Left ventricle myocardium superior (tissue), 1 donor: ENCODE measurements at regions of chr3 and their contacts with region 1.

Region 1: GRCh38 chr3:125246237-125246636 is 33.7 kb upstream of the SLC12A8 start:
- DNase-seq: no peak
- ATAC-seq: no peak

Region 2: GRCh38 chr3:124995460-124995994 is 250.7 kb before region 1 on chr3:
- intact Hi-C with region 1: no loop called
- DNase-seq: peak; percentile 59
- ATAC-seq: peak; percentile 71

Region 3: DNA sequence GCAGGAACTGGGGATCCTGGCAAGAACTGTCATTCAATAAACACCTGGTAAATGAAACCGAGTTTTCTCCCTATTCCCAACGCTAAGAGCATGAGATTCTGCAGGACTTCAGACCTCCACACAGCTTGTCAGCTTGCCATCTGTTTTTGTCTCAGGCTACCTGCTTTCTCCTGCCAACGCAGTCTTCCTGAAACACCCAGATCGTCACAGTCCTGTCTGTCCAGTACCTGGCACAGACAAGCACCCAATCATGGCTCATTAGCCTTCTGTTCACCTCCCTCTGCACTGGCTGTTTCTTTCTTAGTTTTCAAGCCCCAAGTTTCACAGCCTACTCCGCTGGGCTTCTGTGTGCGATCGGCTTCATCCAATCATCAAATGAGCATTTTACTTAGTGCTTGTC is 38.7 kb before region 1 on chr3:
- intact Hi-C with region 1: loop called (anchors 2 kb)
- DNase-seq: no peak
- ATAC-seq: no peak